MCF 10A (cell line): ENCODE measurements at regions of chr3 and their contacts with region 1.

Region 1: DNA sequence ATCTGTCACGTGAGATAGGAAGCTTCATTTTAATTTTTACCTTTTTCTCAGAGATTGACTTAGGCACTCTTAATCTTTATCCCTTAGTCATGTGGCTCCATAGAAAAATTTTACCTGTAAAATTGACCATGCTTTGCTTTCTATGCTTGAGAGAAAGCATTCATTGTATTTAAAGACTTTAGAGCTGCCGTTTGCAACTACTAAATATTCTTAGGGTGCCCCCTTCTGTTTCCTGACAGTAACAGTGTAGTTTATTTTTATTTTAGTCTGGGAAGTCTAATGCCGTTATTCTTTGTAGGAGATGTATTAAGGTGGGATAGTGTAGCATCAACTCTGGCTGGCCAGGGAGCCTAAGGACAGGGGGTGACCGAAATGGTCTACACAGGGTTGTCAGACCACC is 84.5 kb upstream of the SYNPR start:
- DNase-seq: peak; percentile 26
- H3K4me3 Mint-ChIP-seq: no peak overlapping the region
- H3K27ac Mint-ChIP-seq: no peak overlapping the region
- H3K4me1 Mint-ChIP-seq: no peaks in the 10 kb centered on the region
- H3K27me3 Mint-ChIP-seq: peaks cover 64% of the 10 kb centered on the region
- CTCF ChIP-seq: peak; percentile 52

Region 2: GRCh38 chr3:62659622-62660021 is 534.0 kb before region 1 on chr3:
- CTCF ChIA-PET with region 1: interaction called, 227 read pairs
- POLR2A ChIA-PET with region 1: interaction called, 4 read pairs
- intact Hi-C with region 1: no loop called
- DNase-seq: no peak
- H3K4me3 Mint-ChIP-seq: no peak overlapping the region
- H3K27ac Mint-ChIP-seq: no peak overlapping the region
- H3K4me1 Mint-ChIP-seq: no peaks in the 10 kb centered on the region
- H3K27me3 Mint-ChIP-seq: no peaks in the 10 kb centered on the region
- CTCF ChIP-seq: no peak

Region 3: GRCh38 chr3:62833531-62833930 is 360.1 kb before region 1 on chr3:
- CTCF ChIA-PET with region 1: interaction called, 5 read pairs
- POLR2A ChIA-PET with region 1: interaction called, 3 read pairs
- intact Hi-C with region 1: loop called (anchors 1 kb)
- DNase-seq: peak; percentile 18
- H3K4me3 Mint-ChIP-seq: no peak overlapping the region
- H3K27ac Mint-ChIP-seq: no peak overlapping the region
- H3K4me1 Mint-ChIP-seq: peaks cover 5% of the 10 kb centered on the region
- H3K27me3 Mint-ChIP-seq: peaks cover 54% of the 10 kb centered on the region
- CTCF ChIP-seq: peak; percentile 47